OCI-LY7 (cell line): ENCODE measurements at regions of chr6 and their contacts with region 1.

Region 1: GRCh38 chr6:34315780-34316179 is 67.0 kb upstream of the SMIM29 start:
- DNase-seq: peak; percentile 81
- H3K4me3 ChIP-seq: peak overlapping the region; percentile 35
- H3K27ac ChIP-seq: peak overlapping the region; percentile 77
- H3K4me1 ChIP-seq: peaks cover 56% of the 10 kb centered on the region
- CTCF ChIP-seq: no peak

Region 2: DNA sequence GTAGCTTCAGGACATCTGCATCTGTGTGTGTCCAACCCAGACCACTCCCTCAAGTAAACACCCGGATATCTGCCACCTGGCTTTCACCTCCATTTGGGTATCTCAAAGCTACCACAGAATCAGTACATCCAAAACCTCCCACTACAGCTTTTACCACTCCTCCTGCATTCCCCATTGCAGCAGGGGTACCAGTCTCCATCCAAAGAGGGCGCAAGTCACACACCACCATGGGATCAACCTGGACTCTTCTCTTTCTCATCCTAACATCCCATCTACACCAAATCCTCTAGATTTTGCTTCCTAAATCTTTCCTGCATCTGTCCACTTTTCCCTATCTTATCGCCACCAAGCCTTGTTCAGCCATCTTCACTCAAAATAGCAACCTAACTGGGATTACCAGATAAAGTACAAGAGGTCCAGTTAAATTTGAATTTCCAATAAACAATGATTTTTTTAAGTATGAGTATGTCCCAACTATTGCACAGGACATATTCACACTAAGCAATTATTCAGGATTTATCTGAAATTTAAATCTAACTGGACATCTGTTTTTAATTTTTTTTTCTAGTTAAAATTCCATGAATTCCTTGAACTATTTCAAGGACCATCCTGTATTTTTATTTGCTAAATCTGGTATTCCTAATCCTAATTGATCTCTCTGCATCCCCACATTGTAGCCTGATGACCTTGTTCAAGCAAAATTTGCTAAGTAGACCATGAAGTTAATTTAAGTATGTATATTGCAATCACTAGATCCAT is 347.6 kb before region 1 on chr6:
- CTCF ChIA-PET with region 1: no interaction called
- POLR2A ChIA-PET with region 1: no interaction called
- intact Hi-C with region 1: no loop called
- DNase-seq: no peak
- H3K4me3 ChIP-seq: no peak overlapping the region
- H3K27ac ChIP-seq: no peak overlapping the region
- H3K4me1 ChIP-seq: no peaks in the 10 kb centered on the region
- CTCF ChIP-seq: peak; percentile 59

Region 3: GRCh38 chr6:34157851-34158250 is 157.9 kb before region 1 on chr6:
- CTCF ChIA-PET with region 1: no interaction called
- POLR2A ChIA-PET with region 1: no interaction called
- intact Hi-C with region 1: no loop called
- DNase-seq: no peak
- H3K4me3 ChIP-seq: no peak overlapping the region
- H3K27ac ChIP-seq: no peak overlapping the region
- H3K4me1 ChIP-seq: peaks cover 10% of the 10 kb centered on the region
- CTCF ChIP-seq: no peak

Region 4: DNA sequence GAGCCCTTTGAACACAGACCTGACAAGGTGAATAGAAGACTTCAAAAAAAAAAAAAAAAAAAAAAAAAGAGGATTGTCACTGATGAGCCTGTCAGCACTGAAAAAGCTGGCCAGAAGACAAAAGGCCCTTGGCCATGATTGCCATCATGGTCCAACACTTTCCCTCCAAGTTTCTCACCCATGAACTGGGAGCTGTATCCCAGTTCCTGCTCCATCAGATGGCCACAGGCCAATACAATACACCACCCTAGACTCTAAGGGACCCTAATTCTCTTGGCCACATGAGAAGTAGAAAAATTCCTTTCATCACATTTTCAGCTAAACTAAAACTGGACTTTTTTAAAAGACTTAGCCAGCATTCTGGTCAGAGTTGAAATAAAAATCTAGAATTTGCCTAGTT is 26.5 kb after region 1 on chr6:
- CTCF ChIA-PET with region 1: no interaction called
- POLR2A ChIA-PET with region 1: interaction called, 10 read pairs
- intact Hi-C with region 1: no loop called
- DNase-seq: no peak
- H3K4me3 ChIP-seq: no peak overlapping the region
- H3K27ac ChIP-seq: no peak overlapping the region
- H3K4me1 ChIP-seq: peaks cover 26% of the 10 kb centered on the region
- CTCF ChIP-seq: no peak

Region 5: DNA sequence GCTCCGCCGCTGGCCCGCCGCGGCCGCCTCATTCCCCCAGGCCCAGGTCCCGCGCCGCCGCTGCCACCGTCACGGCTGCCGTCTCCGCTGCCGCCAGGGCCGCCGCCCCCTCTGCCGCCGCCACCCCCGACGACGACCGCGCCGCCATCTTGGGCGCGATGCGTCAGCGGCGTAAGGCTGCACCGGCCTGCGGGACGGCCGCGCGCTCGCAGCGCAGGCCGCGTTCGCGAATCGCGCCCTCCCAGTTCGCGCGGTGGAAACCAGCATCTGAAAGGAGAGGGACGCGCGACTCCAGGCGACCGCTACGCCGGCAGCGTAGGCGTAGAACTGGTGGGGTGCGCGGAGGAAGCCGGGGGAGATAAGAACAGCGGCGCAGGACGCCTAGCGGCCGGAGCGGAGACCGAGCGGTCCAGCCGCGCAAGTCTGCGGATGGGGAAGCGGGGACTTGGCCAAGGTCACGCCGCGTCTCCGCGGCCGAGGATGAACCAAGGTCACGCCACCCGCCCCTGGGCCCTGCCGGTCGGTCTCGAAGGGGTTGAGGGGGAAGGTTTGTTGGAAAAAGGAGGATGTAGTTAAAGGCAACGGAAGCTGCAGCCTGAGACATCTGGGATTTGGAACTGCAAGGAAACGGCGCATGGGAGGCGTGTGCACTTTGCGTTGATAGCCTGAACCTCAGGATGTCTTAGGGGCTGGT is 76.9 kb after region 1 on chr6 and contains the start of gene NUDT3:
- CTCF ChIA-PET with region 1: no interaction called
- POLR2A ChIA-PET with region 1: interaction called, 3 read pairs
- intact Hi-C with region 1: loop called (anchors 2 kb)
- DNase-seq: peak; percentile 98
- H3K4me3 ChIP-seq: peak within 1 kb of the TSS; percentile 85
- H3K27ac ChIP-seq: peak within 1 kb of the TSS; percentile 76
- H3K4me1 ChIP-seq: peaks cover 23% of the 10 kb centered on the region
- CTCF ChIP-seq: peak; percentile 78
- total RNA-seq, gene NUDT3: 26.8 and 30.7 TPM in 2 replicates